Naive thymus-derived CD8-positive, alpha-beta T cell (primary cell): ENCODE measurements at regions of chr21 and their contacts with region 1.

Region 1: GRCh38 chr21:33924079-33924765 is 8.6 kb upstream of the ATP5PO start:
- DNase-seq: peak; percentile 73 to 93 (median 86)
- ATAC-seq: peak; percentile 93 to 97
- H3K4me3 Mint-ChIP-seq: peak overlapping the region in 5 of 10 donors; percentile 1 to 68 (median 43)
- H3K27ac Mint-ChIP-seq: peak overlapping the region; percentile 25 to 94 (median 75)
- H3K4me1 Mint-ChIP-seq: peaks cover 3 to 15% (median 11%) of the 10 kb centered on the region in 4 donors
- H3K27me3 Mint-ChIP-seq: no peaks in the 10 kb centered on the region

Region 2: DNA sequence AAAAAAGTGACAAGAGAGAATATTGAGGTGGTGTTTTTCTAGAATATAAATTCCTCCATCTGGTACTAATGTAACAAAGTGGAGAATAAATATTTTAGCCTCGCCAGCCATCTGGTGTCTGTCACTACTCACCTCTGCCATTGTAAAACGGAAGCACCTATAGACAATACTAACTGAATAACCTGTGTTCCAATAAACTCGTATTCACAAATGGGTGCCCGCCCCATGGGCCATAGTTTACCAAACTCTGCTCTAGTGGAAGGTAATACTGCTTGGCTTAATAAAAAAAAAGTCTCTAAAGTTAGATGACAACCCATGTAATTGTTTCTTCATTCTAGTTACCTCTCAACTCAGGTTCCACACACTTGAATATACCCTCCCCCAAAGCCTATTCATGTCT is 1653.5 kb before region 1 on chr21:
- POLR2A ChIA-PET with region 1: interaction called, 10 read pairs
- DNase-seq: no peak
- ATAC-seq: no peak
- H3K4me3 Mint-ChIP-seq: no peak overlapping the region
- H3K27ac Mint-ChIP-seq: peak overlapping the region in 1 of 10 donors; percentile 46
- H3K4me1 Mint-ChIP-seq: peaks cover 0 to 10% (median 4%) of the 10 kb centered on the region in 4 donors
- H3K27me3 Mint-ChIP-seq: no peaks in the 10 kb centered on the region

Region 3: GRCh38 chr21:34348890-34349519 is 424.8 kb after region 1 on chr21:
- POLR2A ChIA-PET with region 1: interaction called, 43 read pairs
- DNase-seq: no peak
- ATAC-seq: no peak
- H3K4me3 Mint-ChIP-seq: no peak overlapping the region
- H3K27ac Mint-ChIP-seq: no peak overlapping the region
- H3K4me1 Mint-ChIP-seq: peaks cover 3 to 17% (median 8%) of the 10 kb centered on the region in 4 donors
- H3K27me3 Mint-ChIP-seq: peaks cover 0 to 1% (median 0%) of the 10 kb centered on the region in 5 donors